Activated CD8-positive, alpha-beta memory T cell treated with anti-CD3 and anti-CD28 coated beads, Interleukin-2, amount 10 ng/mL, durations not matched to agents 7 days and 5 days (primary cell): ENCODE measurements at regions of chr17 and their contacts with region 1.

Region 1: DNA sequence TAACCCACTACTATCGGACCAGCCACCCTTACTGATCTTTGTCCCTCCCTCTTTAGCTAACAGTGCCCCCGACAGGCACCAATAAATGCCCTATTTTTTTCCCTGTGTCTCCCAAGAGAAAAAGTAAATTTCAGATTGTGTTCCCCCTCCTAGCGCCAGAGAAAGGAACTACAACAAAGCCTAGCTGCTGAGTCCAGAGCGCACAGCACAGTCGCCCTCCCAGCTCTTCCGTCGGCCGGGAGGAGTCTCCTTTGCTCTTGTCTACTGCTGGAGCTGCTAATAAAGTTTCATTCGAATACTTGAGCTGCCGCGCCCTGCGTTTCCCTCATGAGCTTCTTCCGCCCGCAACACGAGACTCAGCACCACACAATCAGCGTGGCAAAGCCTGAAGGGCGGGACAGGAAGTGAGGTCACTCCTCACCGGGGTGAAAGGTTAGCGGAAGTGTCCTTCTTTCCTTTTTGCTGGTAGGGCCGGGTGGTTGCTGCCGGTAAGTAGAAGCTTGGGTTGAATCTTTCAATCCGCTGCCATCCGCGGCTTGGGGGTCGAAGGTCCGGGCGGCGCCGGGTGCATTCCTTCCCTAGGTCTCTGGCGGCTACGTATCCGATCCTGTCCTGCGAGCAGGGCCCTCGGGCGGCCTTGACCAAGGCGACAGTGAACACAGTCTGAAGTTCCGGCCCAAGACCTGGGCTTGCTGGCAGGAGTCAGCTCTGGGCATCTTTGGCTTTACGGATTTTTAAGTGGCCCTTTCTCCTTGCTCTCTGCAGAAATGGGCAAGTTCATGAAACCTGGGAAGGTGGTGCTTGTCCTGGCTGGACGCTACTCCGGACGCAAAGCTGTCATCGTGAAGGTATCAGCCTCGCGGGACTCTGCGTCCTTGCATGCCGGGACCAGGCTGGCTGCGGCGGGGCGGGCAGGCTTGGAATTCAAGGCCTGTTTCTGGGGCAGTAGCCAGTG is at the start of gene RPL27:
- DNase-seq: peak; percentile 99
- ATAC-seq: peak; percentile 99
- H3K4me3 Mint-ChIP-seq: peak within 1 kb of the TSS; percentile 100
- H3K27ac Mint-ChIP-seq: peak within 1 kb of the TSS; percentile 99
- H3K4me1 Mint-ChIP-seq: peaks cover 36% of the 10 kb centered on the region
- H3K27me3 Mint-ChIP-seq: no peaks in the 10 kb centered on the region
- total RNA-seq, gene RPL27: 889 to 934 TPM

Region 2: GRCh38 chr17:42980398-42981397 is 17.6 kb before region 1 on chr17 and contains the start of gene RUNDC1:
- CTCF ChIA-PET with region 1: interaction called, 26 read pairs
- DNase-seq: peak; percentile 94
- ATAC-seq: peak; percentile 83
- H3K4me3 Mint-ChIP-seq: peak within 1 kb of the TSS; percentile 100
- H3K27ac Mint-ChIP-seq: peak within 1 kb of the TSS; percentile 97
- H3K4me1 Mint-ChIP-seq: peaks cover 39% of the 10 kb centered on the region
- H3K27me3 Mint-ChIP-seq: no peaks in the 10 kb centered on the region
- total RNA-seq, gene RUNDC1: 16.9 to 17.4 TPM